Common myeloid progenitor, CD34-positive (primary cell): ENCODE measurements at regions of chr18 and their contacts with region 1.

Region 1: DNA sequence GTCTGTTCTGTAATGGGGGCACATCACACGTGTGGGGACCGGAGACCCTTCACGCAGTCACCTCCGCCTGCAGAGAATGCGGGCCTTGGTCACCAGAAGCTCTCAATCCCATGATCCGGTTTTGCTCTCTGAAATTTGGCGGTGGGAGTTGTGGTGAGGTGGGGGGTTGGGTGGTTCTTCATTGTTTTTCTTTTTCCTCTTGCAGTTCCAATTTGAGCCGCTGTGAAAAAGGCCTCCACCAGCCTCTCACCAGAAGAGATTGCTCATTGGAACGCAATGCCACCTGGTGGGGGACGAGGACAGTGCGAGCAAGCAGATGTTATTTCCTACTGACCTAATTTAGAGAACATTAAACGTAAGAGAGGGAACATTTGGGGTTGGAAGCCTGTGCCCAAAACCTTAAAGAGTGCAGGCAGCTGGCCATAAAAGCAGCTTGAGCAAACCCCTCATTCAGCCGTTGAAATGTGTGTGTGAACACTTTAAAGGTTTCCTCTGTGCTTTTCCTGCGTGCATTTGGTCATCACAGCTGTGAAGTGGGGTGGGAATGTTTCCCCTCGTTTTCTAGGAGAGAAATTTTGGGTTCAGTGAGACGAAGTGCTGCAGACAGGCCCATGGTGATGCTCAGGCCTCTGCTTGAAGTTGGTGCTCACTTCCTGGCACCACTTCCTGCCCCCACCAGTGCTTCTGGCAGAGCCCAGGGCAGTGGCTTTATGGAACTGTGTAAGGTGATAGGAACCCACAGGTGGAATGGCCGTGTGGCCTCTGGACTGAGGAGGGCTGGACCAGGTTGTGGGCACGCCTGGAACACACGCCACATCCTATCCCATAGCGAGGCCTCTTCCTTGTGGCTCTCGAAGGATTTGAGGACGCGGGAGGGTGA is 61.7 kb downstream of the ZCCHC2 start:
- DNase-seq: peak; percentile 92 to 96 (median 94)
- H3K4me3 ChIP-seq: peak overlapping the region in 5 of 7 experiments; percentile 46 to 79 (median 57)
- H3K27ac ChIP-seq: no peak overlapping the region
- H3K4me1 ChIP-seq: peaks cover 0 to 20% (median 13%) of the 10 kb centered on the region in 4 experiments
- H3K27me3 ChIP-seq: no peaks in the 10 kb centered on the region

Region 2: DNA sequence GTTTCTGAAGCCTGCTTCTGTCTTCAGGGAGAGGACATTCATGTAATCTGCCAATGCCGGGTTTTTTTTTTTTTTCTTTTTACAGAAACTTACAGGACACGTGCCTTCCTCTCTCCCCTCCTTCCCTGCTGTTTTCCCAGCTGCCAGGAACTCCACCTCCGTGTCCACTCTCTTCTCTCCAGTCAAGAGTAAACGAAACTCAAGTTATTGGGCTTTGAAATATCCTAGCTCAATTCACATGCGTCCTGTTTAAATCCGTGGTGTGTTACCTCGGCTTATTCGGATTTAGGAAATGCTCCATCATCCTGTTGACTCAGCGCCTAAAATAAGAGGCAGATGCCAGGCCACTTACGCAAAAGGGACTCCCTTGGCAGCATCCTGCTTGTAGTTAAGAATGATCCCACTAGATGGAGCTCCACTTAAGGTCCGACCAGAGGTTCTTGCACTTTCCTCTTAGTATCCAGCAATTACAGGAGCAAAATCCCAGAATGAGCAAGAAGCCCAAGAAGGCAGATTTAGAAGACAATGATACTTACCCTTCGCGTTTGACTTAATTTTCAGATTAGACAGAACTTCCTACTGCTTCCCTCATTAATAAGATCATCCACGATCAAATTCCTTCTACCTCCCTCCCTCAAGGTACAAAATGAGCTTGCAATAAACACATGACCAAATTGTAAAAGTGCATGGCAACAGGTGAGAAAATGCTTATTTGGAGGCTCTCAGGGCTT is 158.9 kb before region 1 on chr18:
- CTCF ChIA-PET with region 1: interaction called, 13 read pairs
- POLR2A ChIA-PET with region 1: no interaction called
- DNase-seq: peak; percentile 93 to 96 (median 94)
- H3K4me3 ChIP-seq: peak overlapping the region in 2 of 7 experiments; percentile 51 to 53
- H3K27ac ChIP-seq: no peak overlapping the region
- H3K4me1 ChIP-seq: peaks cover 2 to 22% (median 11%) of the 10 kb centered on the region in 4 experiments
- H3K27me3 ChIP-seq: no peaks in the 10 kb centered on the region

Region 3: DNA sequence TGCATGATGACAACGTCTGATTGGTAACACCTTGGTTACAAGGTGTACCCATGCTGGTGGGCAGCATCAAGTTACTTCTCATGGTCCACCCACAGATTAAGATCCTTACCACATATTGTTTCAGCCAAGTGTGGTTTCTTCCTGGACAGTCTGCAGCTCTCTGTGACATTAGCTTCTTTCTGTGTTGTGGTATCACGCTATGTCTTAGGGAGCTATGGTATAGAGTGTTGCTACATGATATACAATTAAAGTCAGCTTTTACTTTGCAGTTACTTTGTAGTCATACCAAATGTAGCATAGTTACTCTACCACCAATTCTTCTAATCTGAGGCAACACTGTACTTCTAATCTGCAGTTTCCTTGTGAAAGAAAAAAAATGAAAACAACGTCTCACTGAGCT is 12.8 kb before region 1 on chr18:
- CTCF ChIA-PET with region 1: interaction called, 15 read pairs
- POLR2A ChIA-PET with region 1: no interaction called
- DNase-seq: no peak
- H3K4me3 ChIP-seq: no peak overlapping the region
- H3K27ac ChIP-seq: no peak overlapping the region
- H3K4me1 ChIP-seq: no peaks in the 10 kb centered on the region
- H3K27me3 ChIP-seq: no peaks in the 10 kb centered on the region

Region 4: GRCh38 chr18:62596145-62597005 is 11.9 kb after region 1 on chr18:
- CTCF ChIA-PET with region 1: interaction called, 13 read pairs
- POLR2A ChIA-PET with region 1: no interaction called
- DNase-seq: peak in 2 of 3 donors; percentile 33 to 54
- H3K4me3 ChIP-seq: peak overlapping the region; percentile 43 to 71 (median 58)
- H3K27ac ChIP-seq: no peak overlapping the region
- H3K4me1 ChIP-seq: peaks cover 0 to 15% (median 13%) of the 10 kb centered on the region in 4 experiments
- H3K27me3 ChIP-seq: peaks cover 0 to 41% (median 14%) of the 10 kb centered on the region in 5 experiments

Region 5: GRCh38 chr18:62631173-62631572 is 46.7 kb after region 1 on chr18:
- CTCF ChIA-PET with region 1: no interaction called
- POLR2A ChIA-PET with region 1: no interaction called
- DNase-seq: no peak
- H3K4me3 ChIP-seq: no peak overlapping the region
- H3K27ac ChIP-seq: no peak overlapping the region
- H3K4me1 ChIP-seq: no peaks in the 10 kb centered on the region
- H3K27me3 ChIP-seq: no peaks in the 10 kb centered on the region

Region 6: GRCh38 chr18:62957885-62958472 is 373.5 kb after region 1 on chr18:
- CTCF ChIA-PET with region 1: interaction called, 13 read pairs
- POLR2A ChIA-PET with region 1: no interaction called
- DNase-seq: peak; percentile 46 to 70 (median 67)
- H3K4me3 ChIP-seq: no peak overlapping the region
- H3K27ac ChIP-seq: no peak overlapping the region
- H3K4me1 ChIP-seq: peaks cover 13 to 23% (median 19%) of the 10 kb centered on the region in 4 experiments
- H3K27me3 ChIP-seq: no peaks in the 10 kb centered on the region

Region 7: DNA sequence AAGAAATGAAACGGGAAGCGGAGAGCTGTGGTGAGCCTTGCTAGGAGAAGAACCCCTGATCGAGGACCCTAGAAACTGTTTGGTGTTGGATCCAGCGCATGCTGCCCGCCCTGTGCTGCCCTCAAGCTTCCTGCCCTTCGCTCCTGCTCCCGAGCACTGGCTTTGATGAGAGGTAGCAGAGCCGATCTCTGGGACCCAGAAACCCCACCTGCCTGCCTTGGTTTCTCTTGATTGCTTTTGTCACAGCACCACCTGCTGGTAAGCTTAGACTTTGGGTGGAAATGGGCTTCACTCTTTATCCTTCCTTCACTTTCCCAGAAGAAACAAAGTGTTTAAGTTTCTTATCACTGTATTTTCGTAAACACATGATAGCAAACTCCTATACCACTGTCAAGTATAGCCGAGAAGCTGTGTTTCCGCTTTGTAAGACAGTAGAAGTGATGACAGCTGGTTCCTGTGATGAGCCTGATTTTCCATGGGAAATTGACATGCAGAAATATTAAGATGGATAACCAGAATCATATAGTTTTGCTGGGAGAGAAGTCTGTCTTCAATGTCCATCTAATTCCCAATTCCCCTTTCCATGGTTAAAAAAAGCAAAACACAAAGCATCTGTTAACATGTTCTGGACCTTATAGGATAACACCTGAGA is 398.2 kb after region 1 on chr18:
- CTCF ChIA-PET with region 1: interaction called, 34 read pairs
- POLR2A ChIA-PET with region 1: no interaction called
- DNase-seq: peak; percentile 43 to 53 (median 48)
- H3K4me3 ChIP-seq: peak overlapping the region in 5 of 7 experiments; percentile 21 to 70 (median 58)
- H3K27ac ChIP-seq: no peak overlapping the region
- H3K4me1 ChIP-seq: peaks cover 0 to 8% (median 4%) of the 10 kb centered on the region in 4 experiments
- H3K27me3 ChIP-seq: no peaks in the 10 kb centered on the region